ENCODE measurements at regions of chr6 and their contacts with region 1.

Region 1: GRCh38 chr6:105952772-105953690 is 133.1 kb upstream of the PRDM1 start:
- H3K4me3 Mint-ChIP-seq: no peak overlapping the region
- H3K27ac Mint-ChIP-seq: peak overlapping the region; percentile 92
- H3K4me1 Mint-ChIP-seq: peaks cover 36% of the 10 kb centered on the region
- H3K27me3 Mint-ChIP-seq: no peaks in the 10 kb centered on the region

Region 2: DNA sequence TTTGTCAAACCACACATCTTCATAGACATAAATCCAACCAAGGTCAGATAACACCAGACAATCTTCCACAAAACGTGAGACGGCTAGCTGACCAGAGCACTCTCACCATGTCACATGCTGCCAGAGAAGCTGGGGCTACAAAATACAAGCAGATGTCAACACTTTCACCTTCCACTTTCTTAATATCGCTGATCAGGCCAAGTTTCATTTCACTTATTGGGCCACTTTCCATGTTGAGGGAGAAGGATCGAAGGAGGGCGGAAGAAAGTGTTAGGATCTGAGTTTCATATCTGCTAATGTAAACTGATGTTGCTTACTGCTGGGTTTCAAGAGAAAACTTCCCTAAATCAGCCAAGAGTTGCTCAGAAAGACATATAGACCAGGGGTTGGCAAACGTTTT is 43.9 kb before region 1 on chr6:
- intact Hi-C with region 1: loop called (anchors 5 kb)
- H3K4me3 Mint-ChIP-seq: peak overlapping the region; percentile 9
- H3K27ac Mint-ChIP-seq: peak overlapping the region; percentile 86
- H3K4me1 Mint-ChIP-seq: peaks cover 55% of the 10 kb centered on the region
- H3K27me3 Mint-ChIP-seq: no peaks in the 10 kb centered on the region

Region 3: GRCh38 chr6:105967917-105968584 is 15.0 kb after region 1 on chr6:
- intact Hi-C with region 1: loop called (anchors 2 kb)
- H3K4me3 Mint-ChIP-seq: no peak overlapping the region
- H3K27ac Mint-ChIP-seq: peak overlapping the region; percentile 72
- H3K4me1 Mint-ChIP-seq: peaks cover 20% of the 10 kb centered on the region
- H3K27me3 Mint-ChIP-seq: no peaks in the 10 kb centered on the region

Region 4: DNA sequence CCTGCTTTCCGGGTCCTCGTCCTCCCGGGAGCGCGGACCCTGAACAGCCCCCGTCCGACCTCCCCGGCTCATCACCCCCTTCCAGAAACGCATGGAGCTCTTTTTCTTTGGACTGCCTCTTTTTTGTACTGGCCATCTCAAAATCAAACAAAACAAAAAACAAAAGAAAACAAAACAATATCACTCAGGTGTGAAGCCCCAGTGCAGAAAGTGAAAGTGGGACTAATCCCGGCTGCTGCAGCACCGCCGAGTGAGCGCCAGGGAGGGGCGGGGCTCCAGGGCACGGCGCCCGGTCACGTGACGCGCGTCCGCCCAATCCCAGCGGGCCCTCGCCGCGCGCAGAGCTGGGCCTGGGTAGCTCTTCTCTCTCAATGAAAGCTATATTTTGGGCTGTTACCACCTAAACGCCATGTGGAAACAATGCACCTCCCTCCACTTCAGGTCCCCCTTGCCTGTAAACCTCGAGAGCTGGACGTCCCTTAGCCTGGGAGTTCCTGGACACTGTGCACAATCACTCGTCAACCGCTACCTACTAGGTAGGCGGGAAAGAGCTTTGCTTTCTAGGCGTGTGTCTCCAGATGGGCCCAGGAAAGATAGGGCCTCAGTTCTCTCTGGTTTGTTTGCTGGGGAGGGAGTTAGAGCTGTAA is 39.4 kb after region 1 on chr6:
- intact Hi-C with region 1: loop called (anchors 5 kb)
- H3K4me3 Mint-ChIP-seq: peak overlapping the region; percentile 93
- H3K27ac Mint-ChIP-seq: peak overlapping the region; percentile 93
- H3K4me1 Mint-ChIP-seq: peaks cover 51% of the 10 kb centered on the region
- H3K27me3 Mint-ChIP-seq: peaks cover 15% of the 10 kb centered on the region